CD4-positive, alpha-beta memory T cell (primary cell): ENCODE measurements at regions of chr15 and their contacts with region 1.

Region 1: DNA sequence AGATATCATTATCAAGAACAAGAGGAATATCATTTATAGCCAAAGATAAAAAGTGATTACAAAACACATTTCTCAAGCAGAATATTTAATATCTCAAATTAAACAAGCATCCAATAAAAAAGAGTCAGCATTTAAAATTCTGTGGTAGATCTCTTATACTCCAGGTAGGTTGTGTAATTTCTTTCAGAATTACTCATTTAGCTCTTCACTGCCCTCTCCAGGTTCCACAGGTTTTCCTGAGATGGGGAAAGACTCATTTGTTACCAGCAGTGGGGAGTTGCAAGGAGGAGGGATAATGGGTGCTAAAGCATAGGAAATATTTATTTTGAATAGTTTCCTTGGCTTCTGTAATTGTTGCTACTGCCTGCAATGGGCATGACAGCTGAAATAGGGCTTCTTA is 83.1 kb upstream of the RASGRP1 start:
- DNase-seq: no peak
- H3K4me3 ChIP-seq: no peak overlapping the region
- H3K4me3 Mint-ChIP-seq: peak overlapping the region in 2 of 8 donors; percentile 6 to 52
- H3K27ac ChIP-seq: peak overlapping the region; percentile 4
- H3K27ac Mint-ChIP-seq: peak overlapping the region; percentile 70 to 96 (median 91)
- H3K4me1 ChIP-seq: peaks cover 81% of the 10 kb centered on the region
- H3K4me1 Mint-ChIP-seq: peaks cover 55 to 78% (median 68%) of the 10 kb centered on the region in 4 donors
- H3K27me3 ChIP-seq: no peaks in the 10 kb centered on the region
- H3K27me3 Mint-ChIP-seq: no peaks in the 10 kb centered on the region

Region 2: DNA sequence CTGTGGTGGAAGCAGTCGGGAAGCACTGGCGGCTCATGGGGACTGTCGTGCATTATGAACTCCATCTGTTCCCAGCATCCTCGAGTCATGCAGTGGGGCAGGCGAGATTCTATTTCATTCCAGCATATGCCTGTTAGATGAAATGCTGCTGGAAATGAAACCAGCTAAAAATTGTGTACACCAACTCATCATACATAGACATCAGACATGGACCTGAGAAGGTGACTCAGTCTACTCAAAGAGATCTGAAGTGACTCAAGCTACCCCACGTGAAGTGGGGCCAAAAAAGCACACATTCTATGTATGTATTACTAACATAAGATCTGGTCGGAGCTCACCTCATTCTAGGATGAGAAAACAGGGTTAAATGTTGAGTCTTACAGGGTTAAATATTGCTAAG is 241.2 kb before region 1 on chr15:
- CTCF ChIA-PET with region 1: no interaction called
- POLR2A ChIA-PET with region 1: no interaction called
- intact Hi-C with region 1: no loop called
- DNase-seq: no peak
- H3K4me3 ChIP-seq: no peak overlapping the region
- H3K4me3 Mint-ChIP-seq: no peak overlapping the region
- H3K27ac ChIP-seq: no peak overlapping the region
- H3K27ac Mint-ChIP-seq: no peak overlapping the region
- H3K4me1 ChIP-seq: no peaks in the 10 kb centered on the region
- H3K4me1 Mint-ChIP-seq: no peaks in the 10 kb centered on the region
- H3K27me3 ChIP-seq: no peaks in the 10 kb centered on the region
- H3K27me3 Mint-ChIP-seq: peaks cover 21 to 23% of the 10 kb centered on the region in 2 donors

Region 3: GRCh38 chr15:38610748-38611147 is 36.9 kb before region 1 on chr15:
- CTCF ChIA-PET with region 1: interaction called, 19 read pairs
- POLR2A ChIA-PET with region 1: interaction called, 73 read pairs
- intact Hi-C with region 1: loop called (anchors 2 kb)
- DNase-seq: peak; percentile 38 to 74 (median 49)
- H3K4me3 ChIP-seq: no peak overlapping the region
- H3K4me3 Mint-ChIP-seq: peak overlapping the region in 7 of 8 donors; percentile 2 to 82 (median 55)
- H3K27ac ChIP-seq: peak overlapping the region; percentile 33
- H3K27ac Mint-ChIP-seq: peak overlapping the region; percentile 66 to 95 (median 90)
- H3K4me1 ChIP-seq: peaks cover 48% of the 10 kb centered on the region
- H3K4me1 Mint-ChIP-seq: peaks cover 34 to 62% (median 52%) of the 10 kb centered on the region in 4 donors
- H3K27me3 ChIP-seq: no peaks in the 10 kb centered on the region
- H3K27me3 Mint-ChIP-seq: no peaks in the 10 kb centered on the region

Region 4: DNA sequence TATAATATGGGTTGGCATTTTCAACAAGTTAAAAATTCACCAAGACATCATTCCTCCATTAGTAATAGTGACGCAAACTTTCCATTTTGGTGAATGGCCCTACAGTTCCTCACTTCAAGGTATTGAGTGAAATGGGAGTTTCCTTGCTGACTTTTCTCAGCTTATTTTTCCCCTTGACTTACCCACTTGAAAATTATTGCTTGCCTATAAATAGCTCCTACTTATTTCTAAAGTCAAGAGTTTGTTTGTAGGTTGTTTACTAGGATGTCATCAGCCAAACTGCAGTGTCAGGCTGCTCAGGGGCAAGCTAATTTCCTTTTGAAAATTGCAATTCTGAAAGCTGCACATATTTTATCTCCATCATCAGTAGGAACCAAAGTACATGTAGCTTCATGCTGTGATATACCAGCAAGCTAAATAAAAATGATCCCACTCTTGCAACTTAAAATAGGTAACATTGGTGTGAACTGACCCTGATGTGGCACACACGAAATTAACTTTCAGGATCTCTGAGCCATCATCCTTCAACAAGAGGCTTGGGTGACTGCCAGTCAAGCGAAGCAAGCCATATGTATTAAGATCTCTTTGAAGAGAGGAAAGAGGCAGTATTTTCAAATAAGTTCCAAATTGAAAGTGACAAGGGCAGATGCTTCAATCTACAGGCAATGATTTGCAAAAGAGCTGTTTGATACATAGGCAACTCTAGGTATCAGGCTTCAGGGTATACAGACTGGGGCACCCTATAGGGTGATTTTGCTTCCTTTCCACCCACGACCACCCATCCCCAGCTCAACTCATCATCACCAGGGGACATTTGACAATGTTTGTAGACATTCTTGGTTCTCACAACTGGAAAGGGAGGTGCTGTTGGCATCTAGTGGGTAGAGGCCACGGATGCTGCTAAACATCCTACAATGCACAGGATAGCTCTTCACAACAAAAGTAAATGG is 16.3 kb before region 1 on chr15:
- CTCF ChIA-PET with region 1: interaction called, 9 read pairs
- POLR2A ChIA-PET with region 1: interaction called, 35 read pairs
- intact Hi-C with region 1: no loop called
- DNase-seq: peak in 2 of 5 donors; percentile 15 to 26
- H3K4me3 ChIP-seq: no peak overlapping the region
- H3K4me3 Mint-ChIP-seq: peak overlapping the region in 7 of 8 donors; percentile 8 to 52 (median 26)
- H3K27ac ChIP-seq: no peak overlapping the region
- H3K27ac Mint-ChIP-seq: peak overlapping the region; percentile 49 to 88 (median 75)
- H3K4me1 ChIP-seq: peaks cover 25% of the 10 kb centered on the region
- H3K4me1 Mint-ChIP-seq: peaks cover 19 to 22% (median 20%) of the 10 kb centered on the region in 4 donors
- H3K27me3 ChIP-seq: no peaks in the 10 kb centered on the region
- H3K27me3 Mint-ChIP-seq: no peaks in the 10 kb centered on the region

Region 5: GRCh38 chr15:38660738-38661137 is 13.1 kb after region 1 on chr15:
- CTCF ChIA-PET with region 1: interaction called, 44 read pairs
- POLR2A ChIA-PET with region 1: interaction called, 520 read pairs
- intact Hi-C with region 1: no loop called
- DNase-seq: peak in 2 of 5 donors; percentile 32 to 64
- H3K4me3 ChIP-seq: no peak overlapping the region
- H3K4me3 Mint-ChIP-seq: peak overlapping the region in 6 of 8 donors; percentile 3 to 76 (median 62)
- H3K27ac ChIP-seq: no peak overlapping the region
- H3K27ac Mint-ChIP-seq: peak overlapping the region; percentile 23 to 90 (median 86)
- H3K4me1 ChIP-seq: peaks cover 62% of the 10 kb centered on the region
- H3K4me1 Mint-ChIP-seq: peaks cover 39 to 69% (median 53%) of the 10 kb centered on the region in 4 donors
- H3K27me3 ChIP-seq: no peaks in the 10 kb centered on the region
- H3K27me3 Mint-ChIP-seq: no peaks in the 10 kb centered on the region

Region 6: DNA sequence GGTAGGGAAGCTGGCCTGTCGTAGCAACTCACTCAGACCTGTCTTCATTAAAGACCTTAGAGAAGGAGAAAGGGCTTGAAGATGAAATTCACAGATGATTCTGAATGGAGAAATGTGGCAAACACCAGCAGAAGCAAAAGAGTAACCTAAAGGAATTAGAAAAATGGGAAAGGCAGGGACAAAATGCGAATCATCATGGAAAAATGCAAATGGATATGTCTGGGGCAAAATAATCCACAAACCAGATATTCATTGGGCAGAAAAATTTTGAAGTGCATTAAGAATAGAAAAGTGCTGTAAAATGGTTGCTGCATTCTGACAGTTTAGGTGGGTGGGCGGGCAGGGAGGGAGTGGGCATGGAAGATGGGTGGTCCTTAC is 73.9 kb after region 1 on chr15:
- CTCF ChIA-PET with region 1: no interaction called
- POLR2A ChIA-PET with region 1: no interaction called
- intact Hi-C with region 1: no loop called
- DNase-seq: no peak
- H3K4me3 ChIP-seq: no peak overlapping the region
- H3K4me3 Mint-ChIP-seq: no peak overlapping the region
- H3K27ac ChIP-seq: no peak overlapping the region
- H3K27ac Mint-ChIP-seq: no peak overlapping the region
- H3K4me1 ChIP-seq: no peaks in the 10 kb centered on the region
- H3K4me1 Mint-ChIP-seq: peaks cover 0 to 3% (median 0%) of the 10 kb centered on the region in 4 donors
- H3K27me3 ChIP-seq: no peaks in the 10 kb centered on the region
- H3K27me3 Mint-ChIP-seq: peaks cover 0 to 2% of the 10 kb centered on the region in 2 donors

Region 7: GRCh38 chr15:38733331-38733730 is 85.6 kb after region 1 on chr15:
- CTCF ChIA-PET with region 1: no interaction called
- POLR2A ChIA-PET with region 1: no interaction called
- intact Hi-C with region 1: no loop called
- DNase-seq: no peak
- H3K4me3 ChIP-seq: no peak overlapping the region
- H3K4me3 Mint-ChIP-seq: no peak overlapping the region
- H3K27ac ChIP-seq: no peak overlapping the region
- H3K27ac Mint-ChIP-seq: no peak overlapping the region
- H3K4me1 ChIP-seq: no peaks in the 10 kb centered on the region
- H3K4me1 Mint-ChIP-seq: no peaks in the 10 kb centered on the region
- H3K27me3 ChIP-seq: no peaks in the 10 kb centered on the region
- H3K27me3 Mint-ChIP-seq: peaks cover 0 to 11% of the 10 kb centered on the region in 2 donors